ENCODE measurements at regions of chr18 and their contacts with region 1.

Region 1: GRCh38 chr18:31497837-31498573 is at the start of gene DSG2:
- DNase-seq: peak; percentile 65 to 89 (median 88)
- ATAC-seq: peak; percentile 97
- H3K4me3 ChIP-seq: peak within 1 kb of the TSS; percentile 68
- H3K27ac ChIP-seq: peak within 1 kb of the TSS; percentile 78
- H3K4me1 ChIP-seq: peaks cover 2% of the 10 kb centered on the region
- H3K27me3 ChIP-seq: no peaks in the 10 kb centered on the region
- total RNA-seq, gene DSG2: 73.7 to 77.6 (median 75.2) TPM

Region 2: DNA sequence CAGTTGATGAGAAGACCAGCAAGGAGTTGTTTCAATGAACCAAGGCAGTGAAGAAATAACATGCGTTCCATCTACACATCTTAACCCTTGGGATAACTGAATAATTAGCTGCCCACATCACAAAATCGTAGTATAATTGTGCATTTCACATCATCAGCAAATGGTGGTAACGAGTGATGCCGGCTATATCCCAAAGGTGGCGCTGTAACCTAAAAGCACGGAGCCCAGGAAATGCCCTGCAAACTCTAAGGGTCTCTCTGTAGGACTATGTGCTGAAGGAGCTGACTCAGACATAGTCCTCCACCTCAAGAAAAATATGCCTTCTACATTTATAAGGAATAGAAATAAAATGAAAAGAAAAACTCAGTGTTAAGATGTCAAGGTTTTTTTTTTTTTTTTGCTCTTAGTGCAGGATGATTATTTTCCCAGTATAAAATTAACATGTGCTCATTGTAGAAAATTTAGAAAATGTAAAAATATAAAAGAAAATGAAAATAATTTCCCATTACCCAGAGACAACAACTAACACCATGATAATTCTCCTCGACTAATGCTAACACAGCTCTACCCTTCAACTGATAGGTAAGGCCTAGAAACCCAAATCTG is 73.5 kb before region 1 on chr18:
- intact Hi-C with region 1: loop called in 1 of 4 experiments (anchors 10 kb)
- DNase-seq: peak in 1 of 3 donors; percentile 47
- ATAC-seq: peak in 1 of 2 donors; percentile 36
- H3K4me3 ChIP-seq: no peak overlapping the region
- H3K27ac ChIP-seq: no peak overlapping the region
- H3K4me1 ChIP-seq: no peaks in the 10 kb centered on the region
- H3K27me3 ChIP-seq: no peaks in the 10 kb centered on the region

Region 3: GRCh38 chr18:31538837-31539236 is 40.8 kb after region 1 on chr18:
- intact Hi-C with region 1: no loop called
- DNase-seq: no peak
- ATAC-seq: no peak
- H3K4me3 ChIP-seq: no peak overlapping the region
- H3K27ac ChIP-seq: no peak overlapping the region
- H3K4me1 ChIP-seq: no peaks in the 10 kb centered on the region
- H3K27me3 ChIP-seq: no peaks in the 10 kb centered on the region